PC-9 (cell line): ENCODE measurements at regions of chr11 and their contacts with region 1.

Region 1: DNA sequence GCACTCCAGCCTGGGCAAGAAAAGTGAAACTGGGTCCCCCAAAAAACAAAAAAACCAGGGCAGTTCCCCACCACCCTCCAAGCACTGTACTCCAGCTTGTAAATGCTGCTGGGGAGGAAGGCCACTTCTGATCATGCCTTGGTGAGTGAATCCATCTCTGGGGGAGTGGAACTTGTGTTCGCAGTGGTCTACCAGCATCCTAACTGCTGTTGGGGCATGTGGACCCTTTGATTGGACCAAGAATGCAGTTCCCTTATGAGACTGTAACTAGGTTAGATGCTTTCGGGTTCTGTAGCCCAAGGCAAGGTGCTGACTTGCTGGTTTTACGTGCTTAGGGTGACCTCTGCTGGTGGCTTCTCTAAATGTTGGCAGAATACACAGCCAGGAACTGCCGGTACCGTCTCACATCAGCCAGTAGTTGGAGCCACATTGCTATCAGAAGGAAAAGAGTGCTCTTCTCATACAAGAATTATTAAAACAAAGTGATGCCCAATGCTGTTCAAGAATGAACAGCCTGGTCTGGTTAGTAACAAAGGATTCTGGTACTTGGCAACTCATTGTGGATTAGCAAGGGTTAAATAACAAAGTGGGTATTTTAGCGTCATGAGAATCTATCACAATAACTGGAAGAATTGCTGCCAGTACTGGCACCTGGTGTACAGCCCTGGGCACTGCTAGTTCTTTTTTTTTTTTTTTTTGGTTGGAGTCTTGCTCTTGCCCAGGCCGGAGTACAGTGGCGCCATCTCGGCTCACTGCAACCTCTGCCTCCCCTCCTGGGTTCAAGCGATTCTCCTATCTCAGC is 13.0 kb downstream of the EIF1AD start:
- DNase-seq: peak; percentile 87 to 92
- H3K4me3 ChIP-seq: no peak overlapping the region
- H3K27ac ChIP-seq: no peak overlapping the region
- H3K4me1 ChIP-seq: peaks cover 4% of the 10 kb centered on the region; the same call in 1 of the 2 replicates
- H3K27me3 ChIP-seq: no peaks in the 10 kb centered on the region
- CTCF ChIP-seq: peak; percentile 99

Region 2: GRCh38 chr11:66045177-66045639 is 56.2 kb after region 1 on chr11:
- CTCF ChIA-PET with region 1: interaction called, 3 read pairs
- POLR2A ChIA-PET with region 1: interaction called, 10 read pairs
- intact Hi-C with region 1: no loop called
- DNase-seq: peak; percentile 70 to 81
- H3K4me3 ChIP-seq: peak overlapping the region; percentile 1; the same call in 1 of the 2 replicates
- H3K27ac ChIP-seq: no peak overlapping the region
- H3K4me1 ChIP-seq: no peaks in the 10 kb centered on the region
- H3K27me3 ChIP-seq: no peaks in the 10 kb centered on the region
- CTCF ChIP-seq: peak; percentile 99

Region 3: DNA sequence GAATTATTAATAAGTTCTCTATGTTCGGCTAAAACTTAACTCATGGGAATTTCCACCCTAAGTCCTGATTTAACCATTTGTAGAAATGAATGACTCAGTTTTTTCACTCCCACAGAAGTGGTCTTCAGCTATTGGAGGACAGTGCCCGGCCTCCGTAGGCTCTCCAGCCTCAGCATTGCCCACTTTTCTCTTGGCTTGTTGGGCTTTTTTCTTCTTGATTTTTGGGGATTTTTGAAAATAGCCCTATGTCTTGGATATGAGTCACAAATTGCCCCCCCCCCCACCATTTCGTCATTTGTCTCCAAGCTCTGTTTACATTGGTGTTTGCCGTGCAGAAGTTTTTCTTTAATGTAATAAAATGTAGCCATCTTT is 147.7 kb after region 1 on chr11:
- CTCF ChIA-PET with region 1: no interaction called
- POLR2A ChIA-PET with region 1: no interaction called
- intact Hi-C with region 1: loop called (anchors 1 kb)
- DNase-seq: no peak
- H3K4me3 ChIP-seq: no peak overlapping the region
- H3K27ac ChIP-seq: no peak overlapping the region
- H3K4me1 ChIP-seq: peaks cover 19% of the 10 kb centered on the region
- H3K27me3 ChIP-seq: no peaks in the 10 kb centered on the region
- CTCF ChIP-seq: no peak